GM12878 (cell line): ENCODE measurements at regions of chr2 and their contacts with region 1.

Region 1: GRCh38 chr2:189142893-189143759 is 36.4 kb downstream of the COL5A2 start:
- DNase-seq: peak; percentile 16
- ATAC-seq: peak; percentile 99
- H3K4me3 ChIP-seq: no peak overlapping the region
- H3K27ac ChIP-seq: no peak overlapping the region
- H3K4me1 ChIP-seq: no peaks in the 10 kb centered on the region
- H3K27me3 ChIP-seq: no peaks in the 10 kb centered on the region
- CTCF ChIP-seq: peak; percentile 88 to 97 (median 89); a peak in 5 of 6 replicates
- EP300 ChIP-seq: no peak
- POLR2A ChIP-seq: no peak
- RAD21 ChIP-seq: peak; percentile 76

Region 2: GRCh38 chr2:189096769-189097447 is 46.2 kb before region 1 on chr2:
- CTCF ChIA-PET with region 1: interaction called, 15 read pairs
- POLR2A ChIA-PET with region 1: no interaction called
- RAD21 ChIA-PET with region 1: interaction called, 15 read pairs
- SMC1A ChIA-PET with region 1: interaction called, 11 read pairs
- in situ Hi-C with region 1: no loop called
- intact Hi-C with region 1: loop called (anchors 2 kb)
- DNase-seq: no peak
- ATAC-seq: no peak
- H3K4me3 ChIP-seq: no peak overlapping the region
- H3K27ac ChIP-seq: no peak overlapping the region
- H3K4me1 ChIP-seq: no peaks in the 10 kb centered on the region
- H3K27me3 ChIP-seq: no peaks in the 10 kb centered on the region
- CTCF ChIP-seq: no peak
- EP300 ChIP-seq: no peak
- POLR2A ChIP-seq: no peak
- RAD21 ChIP-seq: no peak

Region 3: GRCh38 chr2:189124175-189124574 is 19.0 kb before region 1 on chr2:
- CTCF ChIA-PET with region 1: interaction called, 39 read pairs
- POLR2A ChIA-PET with region 1: interaction called, 5 read pairs
- RAD21 ChIA-PET with region 1: interaction called, 3 read pairs
- SMC1A ChIA-PET with region 1: interaction called, 3 read pairs
- in situ Hi-C with region 1: no loop called
- intact Hi-C with region 1: no loop called
- DNase-seq: no peak
- ATAC-seq: no peak
- H3K4me3 ChIP-seq: no peak overlapping the region
- H3K27ac ChIP-seq: no peak overlapping the region
- H3K4me1 ChIP-seq: no peaks in the 10 kb centered on the region
- H3K27me3 ChIP-seq: no peaks in the 10 kb centered on the region
- CTCF ChIP-seq: no peak
- EP300 ChIP-seq: no peak
- POLR2A ChIP-seq: no peak
- RAD21 ChIP-seq: no peak

Region 4: DNA sequence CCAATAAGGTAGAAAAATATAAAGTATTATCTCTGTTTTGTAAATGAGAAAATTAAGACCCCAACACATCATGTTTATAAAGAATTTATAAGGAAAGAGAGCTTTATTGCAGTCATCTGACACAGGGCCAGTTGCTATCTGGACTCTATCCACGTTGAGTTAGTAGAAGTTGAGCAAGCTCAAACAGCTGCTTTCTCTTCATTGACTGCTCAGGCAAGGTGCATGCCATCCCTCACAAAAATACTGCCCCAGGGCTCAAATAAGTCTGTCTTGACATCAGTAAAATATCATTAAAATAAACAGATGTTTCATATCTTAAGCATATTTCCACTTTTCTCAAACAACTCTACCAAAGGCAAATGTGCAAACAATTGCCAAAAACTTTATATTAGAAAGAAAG is 21.6 kb after region 1 on chr2:
- CTCF ChIA-PET with region 1: interaction called, 14 read pairs
- POLR2A ChIA-PET with region 1: no interaction called
- RAD21 ChIA-PET with region 1: no interaction called
- SMC1A ChIA-PET with region 1: interaction called, 4 read pairs
- in situ Hi-C with region 1: no loop called
- intact Hi-C with region 1: no loop called
- DNase-seq: no peak
- ATAC-seq: no peak
- H3K4me3 ChIP-seq: no peak overlapping the region
- H3K27ac ChIP-seq: no peak overlapping the region
- H3K4me1 ChIP-seq: no peaks in the 10 kb centered on the region
- H3K27me3 ChIP-seq: no peaks in the 10 kb centered on the region; a peak in 1 of 4 replicates
- CTCF ChIP-seq: no peak
- EP300 ChIP-seq: no peak
- POLR2A ChIP-seq: no peak
- RAD21 ChIP-seq: no peak

Region 5: DNA sequence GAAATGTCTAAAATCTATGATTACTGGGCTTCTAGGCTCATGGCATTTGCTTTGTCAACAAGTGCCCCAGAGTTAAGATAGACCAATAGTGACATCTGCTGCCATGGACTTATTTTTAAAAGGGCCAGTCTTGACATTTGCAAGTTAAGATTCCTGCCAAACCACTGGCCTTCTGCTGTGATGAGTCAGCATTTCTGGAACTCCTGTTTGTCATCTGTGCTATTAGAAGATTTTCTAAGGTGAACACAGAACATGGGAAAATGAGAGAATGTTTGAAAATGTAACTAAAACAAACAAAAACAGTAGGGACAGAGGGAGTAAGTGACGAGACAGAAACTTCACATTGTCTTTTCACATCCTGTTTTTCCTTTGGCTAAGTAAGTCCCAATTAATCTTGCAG is 204.4 kb after region 1 on chr2:
- CTCF ChIA-PET with region 1: interaction called, 4 read pairs
- POLR2A ChIA-PET with region 1: no interaction called
- RAD21 ChIA-PET with region 1: interaction called, 4 read pairs
- SMC1A ChIA-PET with region 1: interaction called, 11 read pairs
- in situ Hi-C with region 1: no loop called
- intact Hi-C with region 1: loop called (anchors 1 kb)
- DNase-seq: peak; percentile 11
- ATAC-seq: peak; percentile 95
- H3K4me3 ChIP-seq: no peak overlapping the region
- H3K27ac ChIP-seq: no peak overlapping the region
- H3K4me1 ChIP-seq: no peaks in the 10 kb centered on the region
- H3K27me3 ChIP-seq: no peaks in the 10 kb centered on the region
- CTCF ChIP-seq: peak in 1 of 3 experiments; percentile 37; a peak in 2 of 6 replicates
- EP300 ChIP-seq: no peak
- POLR2A ChIP-seq: no peak
- RAD21 ChIP-seq: peak; percentile 42; the same call in 1 of the 2 replicates

Region 6: GRCh38 chr2:189454009-189454408 is 310.9 kb after region 1 on chr2:
- CTCF ChIA-PET with region 1: no interaction called
- POLR2A ChIA-PET with region 1: no interaction called
- RAD21 ChIA-PET with region 1: no interaction called
- SMC1A ChIA-PET with region 1: no interaction called
- in situ Hi-C with region 1: no loop called
- intact Hi-C with region 1: no loop called
- DNase-seq: no peak
- ATAC-seq: no peak
- H3K4me3 ChIP-seq: no peak overlapping the region
- H3K27ac ChIP-seq: no peak overlapping the region
- H3K4me1 ChIP-seq: no peaks in the 10 kb centered on the region
- H3K27me3 ChIP-seq: no peaks in the 10 kb centered on the region
- CTCF ChIP-seq: no peak
- EP300 ChIP-seq: no peak
- POLR2A ChIP-seq: no peak
- RAD21 ChIP-seq: no peak